SK-N-SH (cell line): ENCODE measurements at regions of chr1 and their contacts with region 1.

Region 1: GRCh38 chr1:28329395-28330153 is 734 bp downstream of the MED18 start:
- DNase-seq: peak; percentile 28
- H3K4me3 ChIP-seq: peak overlapping the region; percentile 48 to 89
- H3K27ac ChIP-seq: peak overlapping the region; percentile 78 to 93
- H3K4me1 ChIP-seq: peaks cover 7 to 9% of the 10 kb centered on the region in 2 experiments; a peak in 2 of 4 replicates
- H3K27me3 ChIP-seq: no peaks in the 10 kb centered on the region
- CTCF ChIP-seq: no peak
- EP300 ChIP-seq: no peak
- RAD21 ChIP-seq: no peak

Region 2: GRCh38 chr1:28172713-28173150 is 156.8 kb before region 1 on chr1:
- CTCF ChIA-PET with region 1: no interaction called
- POLR2A ChIA-PET with region 1: no interaction called
- DNase-seq: peak; percentile 48
- H3K4me3 ChIP-seq: no peak overlapping the region
- H3K27ac ChIP-seq: peak overlapping the region in 1 of 2 experiments; percentile 91; a peak in 2 of 4 replicates
- H3K4me1 ChIP-seq: peaks cover 0 to 16% of the 10 kb centered on the region in 2 experiments; a peak in 1 of 4 replicates
- H3K27me3 ChIP-seq: no peaks in the 10 kb centered on the region
- CTCF ChIP-seq: no peak
- EP300 ChIP-seq: no peak
- RAD21 ChIP-seq: no peak

Region 3: GRCh38 chr1:28235755-28236655 is 93.6 kb before region 1 on chr1 and contains the start of gene ATP5IF1:
- CTCF ChIA-PET with region 1: interaction called, 4 read pairs
- POLR2A ChIA-PET with region 1: interaction called, 10 read pairs
- DNase-seq: peak; percentile 97
- H3K4me3 ChIP-seq: peak within 1 kb of the TSS; percentile 87 to 90
- H3K27ac ChIP-seq: peak within 1 kb of the TSS; percentile 61 to 85
- H3K4me1 ChIP-seq: peaks cover 10 to 13% of the 10 kb centered on the region in 2 experiments
- H3K27me3 ChIP-seq: no peaks in the 10 kb centered on the region
- CTCF ChIP-seq: no peak
- EP300 ChIP-seq: no peak
- RAD21 ChIP-seq: no peak
- polyA plus RNA-seq, gene ATP5IF1: 303 and 594 TPM in 2 replicates

Region 4: GRCh38 chr1:28259307-28260167 is 70.0 kb before region 1 on chr1 and contains the start of gene SESN2:
- CTCF ChIA-PET with region 1: interaction called, 5 read pairs
- POLR2A ChIA-PET with region 1: interaction called, 12 read pairs
- DNase-seq: peak; percentile 98
- H3K4me3 ChIP-seq: peak within 1 kb of the TSS; percentile 78 to 96
- H3K27ac ChIP-seq: peak within 1 kb of the TSS; percentile 82 to 83
- H3K4me1 ChIP-seq: peaks cover 12 to 14% of the 10 kb centered on the region in 2 experiments; a peak in 1 of 4 replicates
- H3K27me3 ChIP-seq: no peaks in the 10 kb centered on the region
- CTCF ChIP-seq: no peak
- EP300 ChIP-seq: no peak
- RAD21 ChIP-seq: no peak
- polyA plus RNA-seq, gene SESN2: 14.1 and 15.4 TPM in 2 replicates

Region 5: DNA sequence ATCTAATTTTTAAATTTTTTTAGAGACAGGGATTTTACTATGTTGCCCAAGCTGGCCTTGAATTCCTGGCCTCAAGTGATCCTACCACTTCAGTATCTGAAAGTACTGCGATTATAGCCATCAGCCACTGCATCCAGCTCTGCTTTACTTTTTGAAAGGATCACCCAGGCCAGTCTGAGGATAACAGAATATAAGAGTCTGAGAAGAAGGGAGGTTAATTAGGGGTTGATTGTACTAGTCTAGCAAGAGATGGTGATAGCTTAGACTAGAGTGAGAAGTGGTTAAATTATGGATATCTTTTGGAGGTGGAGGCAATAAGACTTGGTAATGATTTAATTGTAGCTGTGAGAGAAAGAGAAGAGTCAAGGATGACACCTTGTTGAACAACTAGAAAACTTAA is 72.2 kb after region 1 on chr1:
- CTCF ChIA-PET with region 1: no interaction called
- POLR2A ChIA-PET with region 1: no interaction called
- DNase-seq: no peak
- H3K4me3 ChIP-seq: no peak overlapping the region
- H3K27ac ChIP-seq: no peak overlapping the region
- H3K4me1 ChIP-seq: no peaks in the 10 kb centered on the region; a peak in 1 of 4 replicates
- H3K27me3 ChIP-seq: no peaks in the 10 kb centered on the region
- CTCF ChIP-seq: no peak
- EP300 ChIP-seq: no peak
- RAD21 ChIP-seq: no peak